Activated CD4-positive, alpha-beta T cell treated with anti-CD3 and anti-CD28 coated beads for 36 hours (primary cell): ENCODE measurements at regions of chr20 and their contacts with region 1.

Region 1: GRCh38 chr20:3156811-3157619 is 2.6 kb downstream of the FASTKD5 start:
- DNase-seq: peak; percentile 41
- ATAC-seq: peak; percentile 89
- H3K4me3 Mint-ChIP-seq: peak overlapping the region; percentile 91
- H3K27ac Mint-ChIP-seq: peak overlapping the region; percentile 91
- H3K4me1 Mint-ChIP-seq: peaks cover 60% of the 10 kb centered on the region
- H3K27me3 Mint-ChIP-seq: no peaks in the 10 kb centered on the region

Region 2: DNA sequence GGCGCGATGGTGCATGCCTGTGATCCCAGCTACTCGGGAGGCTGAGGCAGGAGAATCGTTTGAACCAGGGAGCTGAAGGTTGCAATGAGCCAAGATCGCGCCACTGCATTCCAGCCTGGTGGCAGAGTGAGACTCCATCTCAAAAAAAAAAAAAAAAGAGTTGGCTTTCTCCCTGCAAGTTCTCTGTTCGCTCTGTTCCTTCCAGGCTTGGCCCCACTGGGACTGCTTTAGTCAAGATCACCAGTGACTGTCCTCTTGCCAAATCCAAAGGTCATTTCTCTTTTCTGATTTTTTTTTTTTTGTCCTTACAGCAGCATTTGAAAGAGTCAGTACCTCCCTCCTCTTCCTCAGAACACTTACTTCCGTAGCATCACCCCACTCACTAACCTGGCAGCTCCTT is 124.4 kb before region 1 on chr20:
- CTCF ChIA-PET with region 1: no interaction called
- POLR2A ChIA-PET with region 1: no interaction called
- intact Hi-C with region 1: no loop called
- DNase-seq: no peak
- ATAC-seq: no peak
- H3K4me3 Mint-ChIP-seq: no peak overlapping the region
- H3K27ac Mint-ChIP-seq: no peak overlapping the region
- H3K4me1 Mint-ChIP-seq: peaks cover 12% of the 10 kb centered on the region
- H3K27me3 Mint-ChIP-seq: no peaks in the 10 kb centered on the region

Region 3: DNA sequence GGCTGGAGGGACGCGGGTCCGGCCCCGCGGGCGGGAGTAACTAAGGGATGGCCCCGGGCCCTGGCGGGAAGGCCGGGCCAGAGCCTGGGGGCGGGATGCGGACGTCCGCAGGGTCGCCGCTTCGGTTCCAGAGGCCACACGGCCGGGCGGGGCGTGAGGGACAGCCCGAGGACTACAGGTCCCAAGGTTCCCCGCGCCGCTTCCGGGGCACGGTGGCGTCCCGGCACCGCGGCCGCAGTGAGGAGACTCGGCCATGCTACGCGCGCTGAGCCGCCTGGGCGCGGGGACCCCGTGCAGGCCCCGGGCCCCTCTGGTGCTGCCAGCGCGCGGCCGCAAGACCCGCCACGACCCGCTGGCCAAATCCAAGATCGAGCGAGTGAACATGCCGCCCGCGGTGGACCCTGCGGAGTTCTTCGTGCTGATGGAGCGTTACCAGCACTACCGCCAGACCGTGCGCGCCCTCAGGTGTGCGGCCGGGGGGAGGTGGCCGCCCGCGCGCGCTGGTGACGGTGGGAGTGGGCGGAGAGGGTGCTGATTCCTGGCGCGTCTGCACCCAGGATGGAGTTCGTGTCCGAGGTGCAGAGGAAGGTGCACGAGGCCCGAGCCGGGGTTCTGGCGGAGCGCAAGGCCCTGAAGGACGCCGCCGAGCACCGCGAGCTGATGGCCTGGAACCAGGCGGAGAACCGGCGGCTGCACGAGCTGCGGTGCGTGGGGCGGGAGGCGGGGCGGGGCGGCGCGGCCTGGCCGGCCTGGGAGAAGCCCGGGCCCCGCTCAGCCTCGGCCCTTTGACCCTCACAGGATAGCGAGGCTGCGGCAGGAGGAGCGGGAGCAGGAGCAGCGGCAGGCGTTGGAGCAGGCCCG is 111.0 kb before region 1 on chr20 and contains the start of gene MRPS26:
- CTCF ChIA-PET with region 1: no interaction called
- POLR2A ChIA-PET with region 1: no interaction called
- intact Hi-C with region 1: loop called (anchors 1 to 5 kb)
- DNase-seq: peak; percentile 92
- ATAC-seq: peak; percentile 94
- H3K4me3 Mint-ChIP-seq: peak within 1 kb of the TSS; percentile 89
- H3K27ac Mint-ChIP-seq: peak within 1 kb of the TSS; percentile 88
- H3K4me1 Mint-ChIP-seq: peaks cover 27% of the 10 kb centered on the region
- H3K27me3 Mint-ChIP-seq: no peaks in the 10 kb centered on the region
- total RNA-seq, gene MRPS26: 107 to 153 TPM

Region 4: DNA sequence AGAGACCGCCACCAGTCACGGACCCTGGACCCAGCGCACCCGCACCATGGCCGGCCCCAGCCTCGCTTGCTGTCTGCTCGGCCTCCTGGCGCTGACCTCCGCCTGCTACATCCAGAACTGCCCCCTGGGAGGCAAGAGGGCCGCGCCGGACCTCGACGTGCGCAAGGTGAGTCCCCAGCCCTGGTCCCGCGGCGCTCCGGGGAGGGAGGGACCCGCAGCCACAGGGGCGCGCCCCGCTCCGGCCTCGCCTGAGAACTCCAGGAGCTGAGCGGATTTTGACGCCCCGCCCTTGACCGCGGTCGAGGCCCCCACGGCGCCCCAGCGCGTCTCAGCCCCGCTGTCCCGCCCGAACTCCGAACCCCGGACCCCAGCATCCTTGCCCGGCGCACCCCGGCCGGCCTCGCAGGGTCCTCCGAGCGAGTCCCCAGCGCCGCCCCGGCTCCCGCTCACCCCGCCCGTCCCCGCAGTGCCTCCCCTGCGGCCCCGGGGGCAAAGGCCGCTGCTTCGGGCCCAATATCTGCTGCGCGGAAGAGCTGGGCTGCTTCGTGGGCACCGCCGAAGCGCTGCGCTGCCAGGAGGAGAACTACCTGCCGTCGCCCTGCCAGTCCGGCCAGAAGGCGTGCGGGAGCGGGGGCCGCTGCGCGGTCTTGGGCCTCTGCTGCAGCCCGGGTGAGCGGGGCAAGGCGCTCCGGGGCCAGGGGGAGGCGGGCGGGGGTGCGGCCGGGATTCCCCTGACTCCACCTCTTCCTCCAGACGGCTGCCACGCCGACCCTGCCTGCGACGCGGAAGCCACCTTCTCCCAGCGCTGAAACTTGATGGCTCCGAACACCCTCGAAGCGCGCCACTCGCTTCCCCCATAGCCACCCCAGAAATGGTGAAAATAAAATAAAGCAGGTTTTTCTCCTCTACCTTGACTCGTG is 85.1 kb before region 1 on chr20 and contains the start of gene OXT:
- CTCF ChIA-PET with region 1: no interaction called
- POLR2A ChIA-PET with region 1: no interaction called
- intact Hi-C with region 1: loop called in 1 of 2 experiments (anchors 5 kb)
- DNase-seq: peak; percentile 83
- ATAC-seq: peak; percentile 74
- H3K4me3 Mint-ChIP-seq: peak within 1 kb of the TSS; percentile 61
- H3K27ac Mint-ChIP-seq: peak within 1 kb of the TSS; percentile 87
- H3K4me1 Mint-ChIP-seq: peaks cover 27% of the 10 kb centered on the region
- H3K27me3 Mint-ChIP-seq: no peaks in the 10 kb centered on the region
- total RNA-seq, gene OXT: 0.40 TPM in 1 of 2 experiments, not detected in the other

Region 5: GRCh38 chr20:3121271-3121911 is 35.6 kb before region 1 on chr20:
- CTCF ChIA-PET with region 1: interaction called, 3 read pairs
- POLR2A ChIA-PET with region 1: interaction called, 3 read pairs
- intact Hi-C with region 1: loop called (anchors 2 to 5 kb)
- DNase-seq: no peak
- ATAC-seq: no peak
- H3K4me3 Mint-ChIP-seq: no peak overlapping the region
- H3K27ac Mint-ChIP-seq: peak overlapping the region; percentile 30
- H3K4me1 Mint-ChIP-seq: peaks cover 40% of the 10 kb centered on the region
- H3K27me3 Mint-ChIP-seq: no peaks in the 10 kb centered on the region

Region 6: DNA sequence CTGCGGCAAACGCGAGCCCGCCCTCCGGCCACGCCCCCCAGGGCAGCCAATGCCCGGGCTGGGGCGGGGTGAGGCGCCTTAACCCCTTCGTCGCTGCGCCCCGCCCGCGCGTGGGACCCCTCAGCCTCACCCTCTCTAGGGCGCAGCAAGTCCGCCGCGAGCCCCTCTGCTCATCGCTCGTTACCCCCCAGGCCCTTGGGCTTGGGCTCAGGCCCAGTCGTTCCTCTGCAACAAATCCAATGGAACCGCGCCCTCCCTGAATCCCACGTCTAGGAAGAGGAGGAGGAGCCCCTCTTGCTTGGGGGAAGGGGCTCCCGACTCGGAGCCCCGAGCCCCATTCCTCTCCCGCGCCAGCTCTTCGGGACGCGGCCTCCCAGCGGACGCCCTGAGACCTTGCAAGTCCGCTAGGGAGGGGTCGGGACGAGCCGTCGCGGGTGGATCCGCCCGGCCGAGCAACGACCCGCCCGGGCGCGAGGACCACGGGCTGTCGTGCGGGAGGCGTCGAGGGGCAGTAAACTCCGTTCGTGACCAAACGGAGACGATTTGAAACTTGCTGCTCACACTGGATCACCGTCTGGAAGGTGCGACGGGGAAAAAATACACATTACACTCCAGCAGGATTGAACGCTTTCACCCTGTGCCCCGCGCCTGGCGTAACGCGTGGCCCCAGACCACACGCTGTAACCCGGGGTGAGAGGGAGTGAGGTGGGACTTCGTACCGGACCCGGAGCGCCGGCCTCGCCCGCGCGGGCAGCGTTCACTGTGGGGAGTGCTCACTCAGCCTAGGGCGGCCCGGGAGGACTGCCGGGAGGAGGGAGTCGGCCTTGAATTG is 16.8 kb after region 1 on chr20:
- CTCF ChIA-PET with region 1: interaction called, 6 read pairs
- POLR2A ChIA-PET with region 1: interaction called, 8 read pairs
- intact Hi-C with region 1: loop called (anchors 1 kb)
- DNase-seq: peak; percentile 94
- ATAC-seq: peak; percentile 40
- H3K4me3 Mint-ChIP-seq: peak overlapping the region; percentile 77
- H3K27ac Mint-ChIP-seq: peak overlapping the region; percentile 55
- H3K4me1 Mint-ChIP-seq: peaks cover 10% of the 10 kb centered on the region
- H3K27me3 Mint-ChIP-seq: peaks cover 19% of the 10 kb centered on the region

Region 7: DNA sequence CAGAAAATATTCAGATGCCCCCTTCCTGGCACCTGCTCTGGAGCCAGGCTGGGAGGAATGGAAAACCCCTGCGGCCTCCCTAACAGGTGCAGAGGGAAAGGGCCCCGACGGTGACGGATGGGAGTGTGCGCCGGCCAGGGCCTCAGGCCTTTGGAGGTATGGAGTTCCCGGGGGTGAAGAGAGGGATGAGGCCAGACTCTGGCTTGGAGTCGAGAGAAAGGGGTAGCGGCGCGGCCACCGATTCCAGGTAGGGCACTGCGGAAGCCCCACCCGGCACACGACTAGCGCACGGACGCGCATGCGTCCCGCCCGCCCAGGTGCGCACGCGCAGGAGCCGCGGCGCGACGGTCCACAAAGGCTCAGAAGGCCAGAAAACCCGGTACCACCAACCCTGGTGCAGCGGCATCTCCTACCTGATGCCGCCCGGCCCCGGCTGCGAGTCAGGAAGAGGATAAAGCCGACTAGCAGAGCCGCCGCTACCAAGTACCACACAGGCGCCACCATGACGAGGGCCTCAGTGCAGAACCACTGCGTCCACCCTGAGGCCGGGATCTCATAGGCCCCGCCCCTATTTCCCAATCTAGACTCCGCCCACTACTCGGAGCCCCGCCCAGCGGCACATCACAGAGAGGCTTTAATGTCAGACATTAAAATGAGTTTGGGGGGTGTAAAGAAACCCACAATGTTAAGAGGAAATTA is 47.3 kb after region 1 on chr20 and contains the start of gene DDRGK1:
- CTCF ChIA-PET with region 1: interaction called, 3 read pairs
- POLR2A ChIA-PET with region 1: no interaction called
- intact Hi-C with region 1: loop called (anchors 1 to 5 kb)
- DNase-seq: peak; percentile 94
- ATAC-seq: peak; percentile 91
- H3K4me3 Mint-ChIP-seq: peak within 1 kb of the TSS; percentile 92
- H3K27ac Mint-ChIP-seq: peak within 1 kb of the TSS; percentile 98
- H3K4me1 Mint-ChIP-seq: peaks cover 12% of the 10 kb centered on the region
- H3K27me3 Mint-ChIP-seq: no peaks in the 10 kb centered on the region
- total RNA-seq, gene DDRGK1: 49.3 to 52.2 TPM

Region 8: DNA sequence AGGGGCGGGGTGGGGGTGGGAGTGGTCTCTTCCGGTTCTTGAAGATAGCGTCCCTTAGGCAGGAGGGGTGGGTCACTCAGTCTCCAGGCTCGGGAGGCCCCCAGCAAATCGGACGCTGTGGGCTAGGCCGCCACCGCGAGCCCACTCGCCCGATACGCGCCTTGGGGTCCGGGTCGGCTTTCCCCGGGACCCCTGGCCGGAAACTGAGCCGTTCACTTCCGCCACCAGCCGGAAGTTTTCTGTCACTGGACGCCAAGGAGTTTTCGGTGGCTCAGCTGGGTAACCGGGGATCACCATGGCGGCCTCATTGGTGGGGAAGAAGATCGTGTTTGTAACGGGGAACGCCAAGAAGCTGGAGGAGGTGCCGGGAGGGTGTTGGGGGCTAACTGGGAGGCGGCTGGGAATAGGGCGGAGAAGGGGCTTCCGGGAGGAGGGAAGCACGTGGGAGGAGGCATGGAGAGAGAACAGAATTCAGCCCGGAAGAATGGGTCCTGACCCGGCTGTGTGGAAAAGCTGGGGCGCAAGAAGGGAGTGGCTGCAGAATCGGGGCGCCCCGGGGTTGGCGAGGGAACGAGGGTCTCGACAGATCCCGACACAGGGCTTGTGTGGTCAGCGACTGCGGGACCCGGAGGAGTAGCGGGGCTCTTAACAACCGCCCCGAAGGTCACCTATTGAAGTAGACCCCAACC is 52.4 kb after region 1 on chr20 and contains the start of gene ITPA:
- CTCF ChIA-PET with region 1: no interaction called
- POLR2A ChIA-PET with region 1: no interaction called
- intact Hi-C with region 1: loop called (anchors 1 to 5 kb)
- DNase-seq: peak; percentile 78
- ATAC-seq: peak; percentile 43
- H3K4me3 Mint-ChIP-seq: peak within 1 kb of the TSS; percentile 90
- H3K27ac Mint-ChIP-seq: peak within 1 kb of the TSS; percentile 92
- H3K4me1 Mint-ChIP-seq: peaks cover 13% of the 10 kb centered on the region
- H3K27me3 Mint-ChIP-seq: no peaks in the 10 kb centered on the region
- total RNA-seq, gene ITPA: 32.7 to 67.5 TPM